Sigmoid colon (tissue), 7 donors: ENCODE measurements at regions of chr18 and their contacts with region 1.

Region 1: GRCh38 chr18:37537868-37538525 is 27.6 kb downstream of the CELF4 start:
- DNase-seq: peak; percentile 76
- H3K4me3 ChIP-seq: no peak overlapping the region
- H3K27ac ChIP-seq: no peak overlapping the region
- H3K4me1 ChIP-seq: no peaks in the 10 kb centered on the region
- H3K27me3 ChIP-seq: peaks cover 5 to 55% (median 28%) of the 10 kb centered on the region in 3 donors
- CTCF ChIP-seq: peak; percentile 37 to 83 (median 67)
- EP300 ChIP-seq: no peak
- POLR2A ChIP-seq: no peak

Region 2: GRCh38 chr18:37341016-37341415 is 197.0 kb before region 1 on chr18:
- intact Hi-C with region 1: loop called (anchors 5 kb)
- DNase-seq: no peak
- H3K4me3 ChIP-seq: no peak overlapping the region
- H3K27ac ChIP-seq: no peak overlapping the region
- H3K4me1 ChIP-seq: no peaks in the 10 kb centered on the region
- H3K27me3 ChIP-seq: peaks cover 0 to 5% (median 5%) of the 10 kb centered on the region in 3 donors
- CTCF ChIP-seq: no peak
- EP300 ChIP-seq: no peak
- POLR2A ChIP-seq: no peak

Region 3: GRCh38 chr18:37385846-37386778 is 151.9 kb before region 1 on chr18:
- intact Hi-C with region 1: loop called (anchors 10 kb)
- DNase-seq: no peak
- H3K4me3 ChIP-seq: no peak overlapping the region
- H3K27ac ChIP-seq: no peak overlapping the region
- H3K4me1 ChIP-seq: no peaks in the 10 kb centered on the region
- H3K27me3 ChIP-seq: peaks cover 0 to 4% (median 0%) of the 10 kb centered on the region in 3 donors
- CTCF ChIP-seq: peak in 3 of 4 experiments; percentile 31 to 58 (median 39)
- EP300 ChIP-seq: no peak
- POLR2A ChIP-seq: no peak

Region 4: GRCh38 chr18:37465958-37466357 is 72.0 kb before region 1 on chr18:
- intact Hi-C with region 1: no loop called
- DNase-seq: no peak
- H3K4me3 ChIP-seq: no peak overlapping the region
- H3K27ac ChIP-seq: no peak overlapping the region
- H3K4me1 ChIP-seq: no peaks in the 10 kb centered on the region
- H3K27me3 ChIP-seq: no peaks in the 10 kb centered on the region
- CTCF ChIP-seq: no peak
- EP300 ChIP-seq: no peak
- POLR2A ChIP-seq: no peak

Region 5: DNA sequence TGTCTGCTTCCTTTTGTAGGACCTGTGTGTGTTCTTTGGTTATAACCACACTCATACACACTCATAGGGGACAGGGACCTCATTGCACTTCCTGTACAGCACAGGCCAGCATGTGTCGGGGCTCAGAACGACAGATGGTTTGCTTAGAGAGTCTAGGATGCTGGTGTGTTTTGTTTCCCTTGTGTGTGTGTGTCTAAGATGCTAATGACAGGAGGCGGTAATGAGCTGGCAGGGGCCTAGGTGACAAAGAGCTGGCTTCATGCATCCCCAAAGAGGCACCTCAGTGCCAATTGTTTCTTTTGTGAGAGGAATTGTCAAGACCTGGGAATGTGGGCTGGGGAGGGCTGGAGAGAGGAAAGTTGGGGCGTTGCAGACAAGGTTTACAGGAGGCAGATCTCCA is 39.0 kb before region 1 on chr18:
- intact Hi-C with region 1: no loop called
- DNase-seq: no peak
- H3K4me3 ChIP-seq: no peak overlapping the region
- H3K27ac ChIP-seq: no peak overlapping the region
- H3K4me1 ChIP-seq: no peaks in the 10 kb centered on the region
- H3K27me3 ChIP-seq: peaks cover 0 to 7% (median 0%) of the 10 kb centered on the region in 3 donors
- CTCF ChIP-seq: no peak
- EP300 ChIP-seq: no peak
- POLR2A ChIP-seq: no peak